Spleen (tissue), 13 donors: ENCODE measurements at regions of chr14 and their contacts with region 1.

Region 1: GRCh38 chr14:55707365-55707804 is 127.4 kb downstream of the KTN1 start:
- DNase-seq: no peak
- H3K4me3 ChIP-seq: no peak overlapping the region
- H3K27ac ChIP-seq: no peak overlapping the region
- H3K4me1 ChIP-seq: no peaks in the 10 kb centered on the region
- H3K27me3 ChIP-seq: no peaks in the 10 kb centered on the region
- CTCF ChIP-seq: peak in 10 of 11 experiments; percentile 29 to 69 (median 64)
- POLR2A ChIP-seq: no peak

Region 2: GRCh38 chr14:56339855-56340701 is 632.7 kb after region 1 on chr14:
- intact Hi-C with region 1: loop called (anchors 5 kb)
- DNase-seq: peak; percentile 84
- H3K4me3 ChIP-seq: no peak overlapping the region
- H3K27ac ChIP-seq: peak overlapping the region in 1 of 8 donors; percentile 3
- H3K4me1 ChIP-seq: peaks cover 0 to 49% (median 22%) of the 10 kb centered on the region in 6 donors
- H3K27me3 ChIP-seq: no peaks in the 10 kb centered on the region
- CTCF ChIP-seq: peak; percentile 56 to 88 (median 78)
- POLR2A ChIP-seq: no peak

Region 3: DNA sequence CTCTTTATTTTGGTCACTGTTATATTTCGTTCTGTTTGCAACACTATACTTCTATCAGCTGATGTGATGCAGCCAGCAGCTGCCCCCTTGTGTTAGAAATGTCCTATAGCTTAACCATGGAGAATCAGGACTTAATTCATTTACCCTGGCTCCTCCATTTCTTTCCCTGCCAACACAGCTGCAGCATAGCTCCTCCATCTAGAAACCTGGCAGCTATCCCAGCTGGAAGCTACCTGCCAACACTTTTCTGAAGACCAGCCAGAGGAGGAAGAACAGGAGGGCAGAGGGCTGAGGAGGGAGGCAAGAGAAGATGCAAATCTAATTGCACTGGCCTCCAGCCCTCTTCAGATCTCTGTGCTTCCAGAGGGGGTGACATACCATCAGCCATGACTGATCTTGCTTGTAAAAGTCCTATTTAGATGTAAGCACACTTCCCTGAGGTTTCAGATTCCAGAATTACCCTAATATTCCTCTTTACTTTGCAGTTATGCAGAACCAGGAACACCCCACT is 715.4 kb after region 1 on chr14:
- intact Hi-C with region 1: loop called (anchors 10 kb)
- DNase-seq: no peak
- H3K4me3 ChIP-seq: no peak overlapping the region
- H3K27ac ChIP-seq: no peak overlapping the region
- H3K4me1 ChIP-seq: peaks cover 0 to 17% (median 0%) of the 10 kb centered on the region in 6 donors
- H3K27me3 ChIP-seq: no peaks in the 10 kb centered on the region
- CTCF ChIP-seq: peak in 10 of 11 experiments; percentile 25 to 73 (median 58)
- POLR2A ChIP-seq: no peak

Region 4: DNA sequence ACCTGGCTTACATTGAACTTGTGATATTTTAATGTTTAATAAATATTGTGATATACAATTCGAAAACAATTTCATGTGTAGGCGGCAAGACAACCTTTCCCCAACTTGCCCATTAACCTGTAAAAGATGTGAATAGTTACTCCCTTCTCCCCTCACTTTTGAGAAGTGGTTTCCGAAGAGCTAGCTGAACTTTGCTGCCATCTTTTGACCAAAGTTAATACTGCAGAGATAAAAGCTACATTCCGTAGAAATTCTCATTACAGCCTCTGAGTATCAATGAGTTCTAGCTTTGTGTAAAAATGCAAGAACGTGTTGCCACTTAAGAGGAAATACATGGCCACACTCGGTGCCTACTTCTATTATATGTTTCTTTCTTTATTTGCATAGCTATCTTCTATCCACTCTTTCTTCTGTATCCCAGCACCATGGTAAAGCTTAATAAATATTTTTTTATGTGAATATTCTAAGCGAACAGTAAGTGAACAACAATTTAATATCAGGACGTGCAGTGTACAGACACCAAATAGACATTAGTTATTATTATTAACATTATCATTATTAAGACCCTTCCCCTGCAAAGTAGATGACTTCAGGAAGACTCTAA is 767.1 kb after region 1 on chr14:
- intact Hi-C with region 1: loop called (anchors 5 kb)
- DNase-seq: no peak
- H3K4me3 ChIP-seq: no peak overlapping the region
- H3K27ac ChIP-seq: no peak overlapping the region
- H3K4me1 ChIP-seq: no peaks in the 10 kb centered on the region
- H3K27me3 ChIP-seq: peaks cover 0 to 7% (median 0%) of the 10 kb centered on the region in 7 donors
- CTCF ChIP-seq: peak; percentile 36 to 74 (median 66)
- POLR2A ChIP-seq: no peak